Dendritic cell treated with granulocyte-macrophage colony-stimulating factor and Interleukin-4, amounts not matched to agents 40 ng/mL and 50 ng/mL, for 4 days (primary cell): ENCODE measurements at regions of chr16 and their contacts with region 1.

Region 1: GRCh38 chr16:17377360-17378324 is 93.1 kb downstream of the XYLT1 start:
- H3K4me3 Mint-ChIP-seq: peak overlapping the region; percentile 30
- H3K27ac Mint-ChIP-seq: peak overlapping the region; percentile 88
- H3K4me1 Mint-ChIP-seq: peaks cover 78% of the 10 kb centered on the region
- H3K27me3 Mint-ChIP-seq: no peaks in the 10 kb centered on the region

Region 2: DNA sequence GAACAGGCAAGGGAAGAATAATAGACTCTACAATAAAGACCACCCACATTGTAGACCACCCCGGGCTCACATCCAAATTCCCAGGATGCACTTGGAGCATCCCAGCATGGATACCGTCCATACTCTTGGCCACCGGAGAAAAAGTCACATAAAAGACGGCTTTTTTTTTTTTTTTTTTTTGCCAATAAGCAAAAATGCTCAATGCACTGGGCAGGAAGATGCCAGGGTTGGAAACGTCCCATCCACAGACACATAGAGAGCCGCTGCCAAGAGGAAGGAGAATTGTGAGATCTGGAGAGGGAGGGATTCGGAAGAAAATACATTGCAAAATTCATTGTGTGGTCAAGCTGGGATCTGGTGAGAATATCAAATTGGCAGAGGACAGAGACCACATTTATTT is 193.6 kb before region 1 on chr16:
- intact Hi-C with region 1: no loop called
- H3K4me3 Mint-ChIP-seq: no peak overlapping the region
- H3K27ac Mint-ChIP-seq: no peak overlapping the region
- H3K4me1 Mint-ChIP-seq: peaks cover 9% of the 10 kb centered on the region
- H3K27me3 Mint-ChIP-seq: no peaks in the 10 kb centered on the region

Region 3: DNA sequence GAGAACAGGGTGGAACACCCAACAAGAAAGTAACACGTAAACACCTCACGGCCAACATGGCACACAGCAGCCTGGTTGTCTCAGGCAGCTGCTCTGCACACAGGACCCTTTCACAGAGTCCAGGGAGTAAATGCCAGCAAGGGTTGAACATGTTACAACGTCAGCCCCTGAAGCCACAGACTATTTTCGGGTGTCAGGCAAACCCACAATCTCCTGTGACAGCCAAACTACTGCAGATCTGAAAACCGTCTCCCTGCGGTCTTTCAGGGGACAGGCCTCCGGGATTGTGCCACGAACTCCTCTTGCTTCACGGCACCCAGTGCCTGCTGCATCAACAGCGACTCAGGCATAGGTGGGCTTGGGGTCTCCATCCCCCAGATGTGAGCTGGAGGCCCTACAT is 34.6 kb before region 1 on chr16:
- intact Hi-C with region 1: loop called (anchors 5 kb)
- H3K4me3 Mint-ChIP-seq: no peak overlapping the region
- H3K27ac Mint-ChIP-seq: peak overlapping the region; percentile 73
- H3K4me1 Mint-ChIP-seq: peaks cover 91% of the 10 kb centered on the region
- H3K27me3 Mint-ChIP-seq: no peaks in the 10 kb centered on the region

Region 4: GRCh38 chr16:17416461-17417311 is 39.0 kb after region 1 on chr16:
- intact Hi-C with region 1: loop called (anchors 2 kb)
- H3K4me3 Mint-ChIP-seq: peak overlapping the region; percentile 46
- H3K27ac Mint-ChIP-seq: peak overlapping the region; percentile 84
- H3K4me1 Mint-ChIP-seq: peaks cover 51% of the 10 kb centered on the region
- H3K27me3 Mint-ChIP-seq: no peaks in the 10 kb centered on the region

Region 5: DNA sequence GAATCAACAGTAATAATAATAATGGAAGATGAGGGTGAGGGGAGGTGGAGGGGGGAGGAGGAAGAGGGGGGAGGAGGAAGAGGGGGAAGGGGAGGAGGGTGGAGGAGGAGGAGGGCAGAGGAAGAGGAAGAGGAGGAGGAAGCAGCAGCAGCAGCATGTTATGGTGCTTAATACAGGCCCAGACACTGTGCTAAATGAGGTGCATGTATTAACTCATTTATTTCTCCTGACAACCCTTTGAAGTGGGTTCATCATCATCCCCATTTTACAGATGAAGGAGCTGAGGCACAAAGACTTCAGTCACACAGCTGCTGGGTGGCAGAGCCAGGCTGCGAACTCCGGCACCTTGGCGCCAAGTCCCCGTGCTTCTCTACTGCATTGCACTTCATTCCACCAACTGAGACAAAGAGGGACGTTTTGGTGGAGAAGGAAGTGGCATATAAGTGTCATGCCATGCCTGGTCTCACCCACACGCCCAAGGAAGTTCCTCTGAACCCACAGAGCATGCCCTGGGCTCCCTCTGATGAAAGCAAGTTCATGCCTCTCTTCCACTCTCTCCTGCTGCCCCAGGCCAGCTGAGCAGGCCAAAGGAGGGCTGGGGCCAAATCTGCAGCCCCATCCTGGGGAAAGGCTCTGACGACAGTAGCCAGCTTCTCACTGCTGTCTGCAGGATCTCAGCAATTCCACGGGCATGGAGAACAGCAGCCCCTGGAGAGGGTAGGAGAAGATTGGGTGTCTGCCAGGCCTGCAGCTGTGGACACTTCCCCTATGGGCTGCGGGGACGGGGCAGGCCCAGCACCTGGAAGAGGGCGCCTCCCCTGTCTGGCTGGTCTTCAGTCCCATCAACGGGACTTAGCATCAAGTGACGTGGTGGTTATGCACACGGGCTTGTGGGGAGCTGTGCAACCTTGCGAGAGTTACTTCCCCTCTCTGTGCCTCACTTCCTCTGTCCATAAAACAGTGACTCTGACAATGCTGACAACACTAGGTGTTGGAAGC is 71.3 kb after region 1 on chr16:
- intact Hi-C with region 1: loop called (anchors 5 kb)
- H3K4me3 Mint-ChIP-seq: peak overlapping the region; percentile 37
- H3K27ac Mint-ChIP-seq: peak overlapping the region; percentile 92
- H3K4me1 Mint-ChIP-seq: peaks cover 57% of the 10 kb centered on the region
- H3K27me3 Mint-ChIP-seq: no peaks in the 10 kb centered on the region